GM12878 (cell line): ENCODE measurements at regions of chr5 and their contacts with region 1.

Region 1: GRCh38 chr5:56314529-56314928 is 81.4 kb upstream of the ANKRD55 start:
- DNase-seq: no peak
- ATAC-seq: peak; percentile 85
- H3K4me3 ChIP-seq: no peak overlapping the region
- H3K27ac ChIP-seq: no peak overlapping the region
- H3K4me1 ChIP-seq: peaks cover 15% of the 10 kb centered on the region
- H3K27me3 ChIP-seq: no peaks in the 10 kb centered on the region
- CTCF ChIP-seq: peak; percentile 62 to 96 (median 91)
- EP300 ChIP-seq: no peak
- POLR2A ChIP-seq: no peak
- RAD21 ChIP-seq: peak; percentile 64

Region 2: GRCh38 chr5:56303515-56303914 is 11.0 kb before region 1 on chr5:
- CTCF ChIA-PET with region 1: interaction called, 11 read pairs
- POLR2A ChIA-PET with region 1: no interaction called
- RAD21 ChIA-PET with region 1: no interaction called
- SMC1A ChIA-PET with region 1: interaction called, 4 read pairs
- in situ Hi-C with region 1: no loop called
- intact Hi-C with region 1: no loop called
- DNase-seq: no peak
- ATAC-seq: no peak; the same call in 2 of the 3 replicates
- H3K4me3 ChIP-seq: no peak overlapping the region
- H3K27ac ChIP-seq: no peak overlapping the region
- H3K4me1 ChIP-seq: no peaks in the 10 kb centered on the region
- H3K27me3 ChIP-seq: no peaks in the 10 kb centered on the region
- CTCF ChIP-seq: no peak
- EP300 ChIP-seq: no peak
- POLR2A ChIP-seq: no peak
- RAD21 ChIP-seq: no peak